ENCODE measurements at regions of chr7 and their contacts with region 1.

Region 1: DNA sequence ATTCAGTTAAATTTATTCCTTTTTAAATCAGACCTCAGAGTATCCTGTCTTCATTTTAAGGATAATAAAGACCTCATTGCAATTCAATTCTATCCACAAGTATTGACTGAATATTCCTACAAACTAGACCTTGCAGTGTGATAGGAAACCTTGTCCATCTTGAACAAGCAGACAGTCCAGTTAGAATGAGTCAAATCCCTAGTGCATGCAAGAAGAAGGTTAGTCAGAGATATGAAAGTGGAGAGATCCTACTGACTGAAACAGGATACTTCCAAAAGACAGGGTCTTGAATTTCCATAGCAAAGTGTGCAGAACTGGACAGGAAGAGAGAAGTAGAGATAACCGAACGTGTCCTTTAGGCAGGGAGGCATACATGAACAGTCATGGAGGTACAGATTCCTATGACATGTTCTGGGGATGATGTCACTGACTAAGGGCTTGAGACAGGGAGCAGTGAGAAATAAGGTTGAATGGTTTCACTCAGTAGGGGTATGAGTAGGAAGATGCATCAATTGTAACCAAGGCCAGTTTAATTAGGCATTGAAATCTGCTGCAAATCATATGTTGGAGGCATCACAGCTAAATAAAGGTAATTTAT is 45.2 kb downstream of the PPP1R3A start:
- DNase-seq: no peak
- H3K4me3 ChIP-seq: no peak overlapping the region
- H3K27ac ChIP-seq: no peak overlapping the region
- H3K4me1 ChIP-seq: no peaks in the 10 kb centered on the region
- H3K27me3 ChIP-seq: no peaks in the 10 kb centered on the region
- CTCF ChIP-seq: no peak
- POLR2A ChIP-seq: no peak

Region 2: GRCh38 chr7:113730309-113730955 is 143.2 kb before region 1 on chr7:
- CTCF ChIA-PET with region 1: no interaction called
- POLR2A ChIA-PET with region 1: no interaction called
- dilution Hi-C with region 1: no loop called
- intact Hi-C with region 1: no loop called
- DNase-seq: peak; percentile 34
- H3K4me3 ChIP-seq: no peak overlapping the region
- H3K27ac ChIP-seq: no peak overlapping the region
- H3K4me1 ChIP-seq: no peaks in the 10 kb centered on the region
- H3K27me3 ChIP-seq: no peaks in the 10 kb centered on the region
- CTCF ChIP-seq: no peak
- POLR2A ChIP-seq: no peak

Region 3: GRCh38 chr7:113783403-113783802 is 90.2 kb before region 1 on chr7:
- CTCF ChIA-PET with region 1: no interaction called
- POLR2A ChIA-PET with region 1: no interaction called
- dilution Hi-C with region 1: no loop called
- intact Hi-C with region 1: no loop called
- DNase-seq: no peak
- H3K4me3 ChIP-seq: no peak overlapping the region
- H3K27ac ChIP-seq: no peak overlapping the region
- H3K4me1 ChIP-seq: no peaks in the 10 kb centered on the region
- H3K27me3 ChIP-seq: no peaks in the 10 kb centered on the region
- CTCF ChIP-seq: no peak
- POLR2A ChIP-seq: no peak

Region 4: GRCh38 chr7:113918946-113919345 is 45.3 kb after region 1 on chr7 and contains the start of gene PPP1R3A:
- CTCF ChIA-PET with region 1: no interaction called
- POLR2A ChIA-PET with region 1: no interaction called
- dilution Hi-C with region 1: no loop called
- intact Hi-C with region 1: loop called (anchors 2 kb)
- DNase-seq: no peak
- H3K4me3 ChIP-seq: no peak within 1 kb of the TSS
- H3K27ac ChIP-seq: no peak within 1 kb of the TSS
- H3K4me1 ChIP-seq: no peaks in the 10 kb centered on the region
- H3K27me3 ChIP-seq: no peaks in the 10 kb centered on the region
- CTCF ChIP-seq: no peak
- POLR2A ChIP-seq: no peak
- total RNA-seq, gene PPP1R3A: not detected in 2 replicates

Measured in endothelial cell of umbilical vein (primary cell).